Right ventricle myocardium superior (tissue), 1 donor: ENCODE measurements at regions of chr3 and their contacts with region 1.

Region 1: DNA sequence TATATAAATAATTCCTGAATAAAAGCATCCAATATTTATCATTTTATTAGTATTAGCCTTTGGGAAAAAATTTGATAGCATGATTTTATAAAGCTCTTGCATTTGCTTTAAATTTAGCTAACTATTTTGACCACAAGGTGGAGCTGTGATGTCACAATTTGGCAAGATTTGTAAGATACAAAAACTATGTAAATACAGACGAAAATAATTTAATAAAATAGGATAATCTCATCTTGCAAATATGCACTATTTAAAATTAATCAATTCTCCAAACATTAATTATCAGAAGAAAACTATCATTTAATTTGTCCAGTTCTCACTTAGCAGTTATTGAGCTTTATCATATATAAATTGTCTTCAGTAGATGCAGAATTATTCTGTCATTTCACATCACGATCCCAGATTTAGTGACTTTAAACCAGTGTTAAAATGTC is 95.4 kb downstream of the PLOD2 start:
- DNase-seq: no peak
- ATAC-seq: no peak

Region 2: GRCh38 chr3:146189519-146190173 is 124.1 kb after region 1 on chr3:
- intact Hi-C with region 1: loop called (anchors 5 kb)
- DNase-seq: no peak
- ATAC-seq: peak; percentile 87

Region 3: DNA sequence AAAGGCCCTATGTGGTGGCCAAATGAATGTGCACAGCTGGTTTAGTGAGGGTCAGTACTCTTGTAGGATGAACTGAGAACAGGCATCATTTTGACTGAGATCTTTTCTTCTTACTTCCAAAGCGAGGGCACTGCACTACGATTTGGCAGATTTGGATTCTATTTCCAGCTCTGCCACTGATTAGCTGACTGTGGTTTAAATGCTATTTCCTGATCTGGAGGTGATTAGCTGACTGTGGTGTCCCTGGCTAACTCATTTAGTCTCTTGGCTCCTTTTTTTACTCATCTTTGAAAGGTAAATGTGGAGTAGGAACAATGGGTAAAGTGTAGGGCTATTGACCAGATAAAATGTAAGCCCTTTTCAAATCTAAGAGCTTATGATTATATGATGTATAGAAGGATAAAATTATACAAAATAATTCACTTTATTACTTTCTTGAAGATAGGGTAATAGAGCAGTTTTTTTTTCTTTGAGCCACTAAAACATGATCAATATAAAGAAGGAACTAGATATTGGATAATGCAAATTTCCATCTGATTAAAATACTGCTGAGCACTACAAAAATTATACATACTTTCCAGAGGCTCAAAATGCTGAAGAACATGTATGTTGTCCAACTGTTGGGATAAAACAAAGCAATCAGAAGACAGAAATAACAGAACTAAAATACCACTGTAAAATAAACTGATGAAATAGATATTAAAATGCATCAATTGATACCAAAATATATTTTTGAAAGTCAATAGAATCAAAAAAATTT is 135.1 kb after region 1 on chr3:
- intact Hi-C with region 1: no loop called
- DNase-seq: no peak
- ATAC-seq: no peak

Region 4: GRCh38 chr3:146326670-146327543 is 261.3 kb after region 1 on chr3:
- intact Hi-C with region 1: loop called (anchors 10 kb)
- DNase-seq: peak; percentile 45
- ATAC-seq: peak; percentile 75

Region 5: DNA sequence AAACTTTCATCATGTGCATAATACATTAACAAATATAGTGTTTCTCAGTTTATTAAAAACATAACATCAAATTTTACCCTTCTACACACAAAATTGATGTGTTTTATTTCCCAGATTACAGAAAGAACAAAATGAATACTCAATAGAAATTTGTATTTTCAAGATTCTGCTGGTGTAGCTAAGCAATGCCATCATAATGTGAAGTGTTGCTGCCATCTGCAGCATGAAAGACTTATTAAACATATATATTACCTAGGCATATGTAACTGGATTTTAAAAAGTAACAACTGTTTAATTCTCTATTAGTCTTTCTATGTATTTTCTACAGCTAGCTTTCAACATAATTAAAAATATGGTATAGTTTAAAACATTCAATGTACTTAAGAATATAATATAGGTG is 512.1 kb after region 1 on chr3:
- intact Hi-C with region 1: loop called (anchors 10 kb)
- DNase-seq: no peak
- ATAC-seq: peak; percentile 58